ENCODE measurements at regions of chr1 and their contacts with region 1.

Region 1: GRCh38 chr1:214454619-214455396 is 96.6 kb downstream of the PTPN14 start:
- DNase-seq: no peak
- H3K4me3 ChIP-seq: no peak overlapping the region
- H3K27ac ChIP-seq: peak overlapping the region in 1 of 2 donors; percentile 17
- H3K4me1 ChIP-seq: peaks cover 0 to 5% of the 10 kb centered on the region in 2 donors
- H3K27me3 ChIP-seq: no peaks in the 10 kb centered on the region
- CTCF ChIP-seq: no peak

Region 2: GRCh38 chr1:214386747-214387146 is 68.1 kb before region 1 on chr1:
- intact Hi-C with region 1: no loop called
- DNase-seq: no peak
- H3K4me3 ChIP-seq: no peak overlapping the region
- H3K27ac ChIP-seq: peak overlapping the region in 1 of 2 donors; percentile 2
- H3K4me1 ChIP-seq: peaks cover 0 to 4% of the 10 kb centered on the region in 2 donors
- H3K27me3 ChIP-seq: no peaks in the 10 kb centered on the region
- CTCF ChIP-seq: no peak

Region 3: GRCh38 chr1:214494706-214495105 is 39.9 kb after region 1 on chr1:
- intact Hi-C with region 1: loop called (anchors 5 kb)
- DNase-seq: no peak
- H3K4me3 ChIP-seq: no peak overlapping the region
- H3K27ac ChIP-seq: no peak overlapping the region
- H3K4me1 ChIP-seq: peaks cover 3 to 14% of the 10 kb centered on the region in 2 donors
- H3K27me3 ChIP-seq: no peaks in the 10 kb centered on the region
- CTCF ChIP-seq: no peak

Region 4: GRCh38 chr1:214557952-214558735 is 103.3 kb after region 1 on chr1:
- intact Hi-C with region 1: no loop called
- DNase-seq: no peak
- H3K4me3 ChIP-seq: no peak overlapping the region
- H3K27ac ChIP-seq: no peak overlapping the region
- H3K4me1 ChIP-seq: peaks cover 0 to 4% of the 10 kb centered on the region in 2 donors
- H3K27me3 ChIP-seq: no peaks in the 10 kb centered on the region
- CTCF ChIP-seq: no peak

Region 5: GRCh38 chr1:214602764-214603657 is 148.2 kb after region 1 on chr1 and contains the start of gene CENPF:
- intact Hi-C with region 1: no loop called
- DNase-seq: peak; percentile 90 to 97
- H3K4me3 ChIP-seq: peak within 1 kb of the TSS; percentile 71 to 84
- H3K27ac ChIP-seq: no peak within 1 kb of the TSS
- H3K4me1 ChIP-seq: no peaks in the 10 kb centered on the region
- H3K27me3 ChIP-seq: no peaks in the 10 kb centered on the region
- CTCF ChIP-seq: peak in 1 of 3 experiments; percentile 40
- total RNA-seq, gene CENPF: 0.53 TPM

Region 6: GRCh38 chr1:214946615-214947014 is 491.8 kb after region 1 on chr1:
- intact Hi-C with region 1: no loop called
- DNase-seq: no peak
- H3K4me3 ChIP-seq: no peak overlapping the region
- H3K27ac ChIP-seq: no peak overlapping the region
- H3K4me1 ChIP-seq: no peaks in the 10 kb centered on the region
- H3K27me3 ChIP-seq: no peaks in the 10 kb centered on the region
- CTCF ChIP-seq: no peak

Measured in ascending aorta (tissue), 2 donors.